ENCODE measurements at regions of chr3 and their contacts with region 1.

Region 1: GRCh38 chr3:171459942-171460724 is at the start of gene TNIK:
- DNase-seq: peak; percentile 96
- H3K4me3 Mint-ChIP-seq: peak within 1 kb of the TSS; percentile 84
- H3K27ac Mint-ChIP-seq: peak within 1 kb of the TSS; percentile 88
- H3K4me1 Mint-ChIP-seq: peaks cover 36% of the 10 kb centered on the region
- H3K27me3 Mint-ChIP-seq: no peaks in the 10 kb centered on the region
- total RNA-seq, gene TNIK: 27.0 to 28.8 TPM

Region 2: DNA sequence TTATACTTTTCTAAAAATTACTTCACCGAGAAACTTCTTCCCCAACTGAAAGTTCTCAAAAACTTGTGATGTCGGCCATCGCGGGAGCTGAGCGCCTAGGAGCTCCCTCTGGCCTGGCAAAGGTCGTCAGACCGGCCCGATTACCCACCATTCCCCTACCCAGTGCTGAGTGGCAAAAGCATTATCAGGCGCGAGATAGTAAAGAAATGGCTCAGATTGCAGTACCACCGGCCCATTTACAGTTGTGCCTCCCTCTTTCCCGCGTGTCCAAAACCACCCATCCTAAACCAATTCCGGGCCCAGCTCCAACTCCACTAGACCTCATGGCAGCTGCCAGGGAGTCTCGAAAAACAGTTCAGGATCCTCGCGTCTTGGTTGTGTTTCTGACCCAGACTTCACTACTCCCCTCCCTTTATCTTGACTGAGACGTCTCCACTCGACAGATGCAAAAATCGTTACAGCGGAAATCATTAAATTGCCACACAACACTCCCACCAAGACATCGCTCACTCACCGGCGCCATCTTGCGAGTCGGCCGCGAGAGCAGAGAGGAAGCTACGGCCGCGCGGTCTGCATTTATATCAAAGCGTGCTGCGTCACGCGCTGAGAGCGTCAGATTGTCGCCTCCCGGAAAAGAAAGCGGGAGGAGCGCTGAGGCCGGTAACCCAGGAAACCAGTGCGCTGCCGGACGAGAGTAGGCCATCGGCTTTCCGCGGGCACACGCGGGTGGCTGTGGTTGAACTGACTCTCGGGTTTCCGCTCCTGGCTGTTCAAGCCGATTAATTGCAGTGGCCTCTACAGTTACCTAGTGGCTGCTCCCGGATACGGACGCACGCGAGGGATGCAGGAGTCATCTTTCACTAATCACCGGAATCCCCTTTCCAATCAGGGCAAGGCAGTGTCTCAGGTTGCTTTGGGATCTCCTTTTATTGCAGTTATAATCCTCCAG is 590.2 kb before region 1 on chr3 and contains the start of gene RPL22L1:
- CTCF ChIA-PET with region 1: no interaction called
- intact Hi-C with region 1: loop called (anchors 1 kb)
- DNase-seq: peak; percentile 95
- H3K4me3 Mint-ChIP-seq: peak within 1 kb of the TSS; percentile 94
- H3K27ac Mint-ChIP-seq: peak within 1 kb of the TSS; percentile 98
- H3K4me1 Mint-ChIP-seq: peaks cover 14% of the 10 kb centered on the region
- H3K27me3 Mint-ChIP-seq: no peaks in the 10 kb centered on the region
- total RNA-seq, gene RPL22L1: 480 to 525 TPM

Region 3: GRCh38 chr3:171142985-171143384 is 317.1 kb before region 1 on chr3:
- CTCF ChIA-PET with region 1: no interaction called
- intact Hi-C with region 1: no loop called
- DNase-seq: no peak
- H3K4me3 Mint-ChIP-seq: no peak overlapping the region
- H3K27ac Mint-ChIP-seq: no peak overlapping the region
- H3K4me1 Mint-ChIP-seq: no peaks in the 10 kb centered on the region
- H3K27me3 Mint-ChIP-seq: no peaks in the 10 kb centered on the region

Region 4: GRCh38 chr3:171162986-171163723 is 297.0 kb before region 1 on chr3:
- CTCF ChIA-PET with region 1: interaction called, 10 read pairs
- intact Hi-C with region 1: loop called (anchors 1 kb)
- DNase-seq: peak; percentile 44
- H3K4me3 Mint-ChIP-seq: no peak overlapping the region
- H3K27ac Mint-ChIP-seq: no peak overlapping the region
- H3K4me1 Mint-ChIP-seq: peaks cover 25% of the 10 kb centered on the region
- H3K27me3 Mint-ChIP-seq: no peaks in the 10 kb centered on the region

Region 5: GRCh38 chr3:171248425-171249111 is 211.6 kb before region 1 on chr3:
- CTCF ChIA-PET with region 1: interaction called, 4 read pairs
- intact Hi-C with region 1: loop called (anchors 1 kb)
- DNase-seq: no peak
- H3K4me3 Mint-ChIP-seq: no peak overlapping the region
- H3K27ac Mint-ChIP-seq: no peak overlapping the region
- H3K4me1 Mint-ChIP-seq: peaks cover 45% of the 10 kb centered on the region
- H3K27me3 Mint-ChIP-seq: no peaks in the 10 kb centered on the region

Region 6: GRCh38 chr3:171328419-171329082 is 131.6 kb before region 1 on chr3:
- CTCF ChIA-PET with region 1: interaction called, 7 read pairs
- intact Hi-C with region 1: loop called (anchors 2 kb)
- DNase-seq: peak; percentile 75
- H3K4me3 Mint-ChIP-seq: no peak overlapping the region
- H3K27ac Mint-ChIP-seq: no peak overlapping the region
- H3K4me1 Mint-ChIP-seq: peaks cover 60% of the 10 kb centered on the region
- H3K27me3 Mint-ChIP-seq: no peaks in the 10 kb centered on the region

Region 7: GRCh38 chr3:171480526-171480925 is 20.4 kb after region 1 on chr3:
- CTCF ChIA-PET with region 1: interaction called, 4 read pairs
- intact Hi-C with region 1: loop called (anchors 1 kb)
- DNase-seq: peak; percentile 22
- H3K4me3 Mint-ChIP-seq: no peak overlapping the region
- H3K27ac Mint-ChIP-seq: peak overlapping the region; percentile 80
- H3K4me1 Mint-ChIP-seq: peaks cover 16% of the 10 kb centered on the region
- H3K27me3 Mint-ChIP-seq: no peaks in the 10 kb centered on the region

Region 8: GRCh38 chr3:172522871-172523818 is 1063.0 kb after region 1 on chr3 and contains the start of gene TNFSF10:
- CTCF ChIA-PET with region 1: no interaction called
- intact Hi-C with region 1: loop called (anchors 5 kb)
- DNase-seq: peak; percentile 78
- H3K4me3 Mint-ChIP-seq: peak within 1 kb of the TSS; percentile 96
- H3K27ac Mint-ChIP-seq: peak within 1 kb of the TSS; percentile 96
- H3K4me1 Mint-ChIP-seq: peaks cover 42% of the 10 kb centered on the region
- H3K27me3 Mint-ChIP-seq: no peaks in the 10 kb centered on the region
- total RNA-seq, gene TNFSF10: 31.8 to 32.7 TPM